Stomach (tissue), 19 donors: ENCODE measurements at regions of chr5 and their contacts with region 1.

Region 1: GRCh38 chr5:132064738-132065331 is 4.4 kb downstream of the IL3 start:
- DNase-seq: peak; percentile 74 to 83
- H3K4me3 ChIP-seq: no peak overlapping the region
- H3K27ac ChIP-seq: no peak overlapping the region
- H3K4me1 ChIP-seq: peaks cover 0 to 6% (median 0%) of the 10 kb centered on the region in 4 donors
- H3K27me3 ChIP-seq: no peaks in the 10 kb centered on the region
- CTCF ChIP-seq: peak in 5 of 7 experiments; percentile 69 to 96 (median 91)
- EP300 ChIP-seq: no peak
- POLR2A ChIP-seq: no peak

Region 2: GRCh38 chr5:132180134-132180745 is 115.4 kb after region 1 on chr5:
- intact Hi-C with region 1: loop called (anchors 10 kb)
- DNase-seq: peak in 1 of 2 donors; percentile 76
- H3K4me3 ChIP-seq: no peak overlapping the region
- H3K27ac ChIP-seq: no peak overlapping the region
- H3K4me1 ChIP-seq: peaks cover 0 to 18% (median 5%) of the 10 kb centered on the region in 4 donors
- H3K27me3 ChIP-seq: no peaks in the 10 kb centered on the region
- CTCF ChIP-seq: peak in 5 of 7 experiments; percentile 49 to 74 (median 64)
- EP300 ChIP-seq: no peak
- POLR2A ChIP-seq: no peak

Region 3: DNA sequence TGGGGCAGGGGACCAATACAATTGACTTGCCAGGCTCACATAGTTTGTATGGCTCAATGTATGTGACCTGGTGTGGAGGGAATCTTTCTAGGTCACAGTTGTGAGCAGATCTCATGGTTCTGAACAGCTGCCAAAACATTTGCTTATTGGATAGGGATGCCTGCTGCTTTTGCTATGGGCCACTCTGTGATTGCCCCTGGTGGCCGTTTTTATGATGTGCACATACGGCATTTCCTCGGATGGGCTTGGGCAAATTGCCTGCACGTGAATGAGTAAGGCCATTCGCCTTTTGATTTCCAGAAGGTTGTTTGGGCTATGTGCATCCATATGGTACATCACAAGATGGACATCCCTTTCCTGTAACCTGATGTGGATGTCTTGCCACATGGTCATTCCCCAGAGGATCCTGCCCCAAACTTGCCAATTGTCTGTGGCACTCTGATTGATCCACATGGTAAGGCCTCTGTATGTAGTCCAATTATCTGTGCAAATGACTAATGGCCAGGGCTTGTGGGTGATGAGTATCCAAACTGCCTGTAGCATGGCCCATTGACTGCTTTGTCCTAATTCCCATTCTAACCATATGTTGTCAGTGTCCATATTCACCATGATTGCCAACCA is 218.7 kb after region 1 on chr5:
- intact Hi-C with region 1: no loop called
- DNase-seq: peak; percentile 22 to 59
- H3K4me3 ChIP-seq: no peak overlapping the region
- H3K27ac ChIP-seq: no peak overlapping the region
- H3K4me1 ChIP-seq: peaks cover 0 to 5% (median 0%) of the 10 kb centered on the region in 4 donors
- H3K27me3 ChIP-seq: no peaks in the 10 kb centered on the region
- CTCF ChIP-seq: peak in 5 of 7 experiments; percentile 13 to 65 (median 28)
- EP300 ChIP-seq: no peak
- POLR2A ChIP-seq: no peak